Left colon (tissue), 2 donors: ENCODE measurements at regions of chr15 and their contacts with region 1.

Region 1: GRCh38 chr15:40115670-40116093 is 7.0 kb upstream of the BMF start:
- DNase-seq: peak; percentile 57 to 68
- ATAC-seq: peak; percentile 33

Region 2: DNA sequence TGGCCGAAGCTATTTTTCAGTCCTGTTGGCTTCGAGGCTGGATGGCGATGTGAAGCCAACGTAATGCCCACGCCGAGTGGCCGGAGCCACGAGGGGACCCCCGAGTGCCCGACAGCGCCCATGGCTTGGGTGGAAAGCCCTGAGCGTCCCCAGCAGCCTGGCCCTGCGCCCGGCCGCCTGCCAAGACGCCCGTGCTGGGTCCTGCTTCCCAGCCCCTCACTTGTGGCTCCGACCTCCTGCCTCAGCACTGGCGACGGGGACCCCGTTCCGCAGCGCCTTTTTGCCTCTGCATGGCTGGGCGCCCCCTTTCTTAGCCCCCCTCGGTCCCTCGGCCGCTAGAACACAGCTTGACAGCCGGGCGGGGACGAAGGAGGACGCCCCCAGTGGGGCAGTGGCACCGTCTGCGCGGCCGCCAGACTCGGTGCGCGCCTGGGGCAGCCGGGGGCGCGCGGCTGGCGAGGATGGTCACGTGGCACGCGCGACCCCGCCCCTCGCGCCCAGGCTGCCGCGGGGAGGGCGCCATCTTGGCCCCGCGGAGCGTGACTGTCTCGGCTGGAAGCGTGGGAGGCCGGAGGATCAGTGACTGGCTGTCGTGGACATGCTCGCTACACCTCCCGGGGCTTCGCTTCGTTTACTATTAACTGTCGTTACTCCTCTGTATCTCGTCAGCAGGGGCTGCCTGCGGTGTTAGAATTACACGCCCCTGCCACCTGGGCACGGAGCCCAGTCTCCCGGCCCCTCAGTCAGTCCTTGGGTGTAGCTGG is 195.0 kb before region 1 on chr15:
- intact Hi-C with region 1: no loop called
- DNase-seq: peak; percentile 65 to 80
- ATAC-seq: peak; percentile 94

Region 3: GRCh38 chr15:40217159-40217824 is 101.6 kb after region 1 on chr15:
- intact Hi-C with region 1: loop called in 1 of 2 experiments (anchors 10 kb)
- DNase-seq: peak; percentile 13 to 45
- ATAC-seq: peak; percentile 96

Region 4: DNA sequence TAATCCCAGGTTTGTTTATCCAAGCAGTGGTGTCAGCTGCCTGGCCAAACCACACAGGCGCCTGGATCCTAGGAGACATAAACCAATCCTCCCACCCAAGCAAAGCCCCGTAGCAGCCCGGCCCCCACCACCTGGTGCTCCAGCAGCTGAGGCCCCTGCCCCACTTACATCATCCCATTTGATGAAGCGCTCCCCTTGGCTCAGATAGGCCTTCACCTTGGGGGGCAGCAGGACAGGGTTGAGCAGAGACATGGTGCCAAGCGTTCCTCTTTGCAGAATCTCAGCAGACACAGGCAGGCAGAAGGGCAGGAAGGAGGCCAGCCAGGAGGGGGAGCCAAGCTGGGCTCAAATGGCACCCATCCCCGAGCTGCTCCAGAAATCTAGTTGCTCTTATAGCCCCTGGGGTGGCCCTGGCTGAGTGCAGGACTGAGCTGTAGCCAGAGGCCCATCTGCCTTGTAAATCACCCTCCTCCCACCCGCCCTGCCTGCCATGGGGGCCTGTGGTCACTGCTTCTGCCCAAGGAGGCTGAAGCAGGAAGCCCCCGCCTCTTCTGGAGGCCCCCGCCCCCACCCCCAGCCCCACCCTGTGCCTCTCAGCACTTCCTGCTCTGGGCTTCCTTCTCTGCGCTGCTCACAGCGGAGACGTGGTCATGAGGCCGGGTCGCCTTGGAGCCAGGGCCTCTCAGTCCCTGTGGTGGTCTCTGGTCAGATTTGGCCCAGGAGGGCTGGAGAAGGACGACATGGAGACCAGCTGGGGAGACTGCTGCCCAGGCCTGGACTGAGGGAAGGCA is 191.9 kb after region 1 on chr15 and contains the start of gene PLCB2:
- intact Hi-C with region 1: no loop called
- DNase-seq: peak; percentile 55 to 62
- ATAC-seq: peak; percentile 42
- total RNA-seq, gene PLCB2: 6.0 to 11.2 TPM